CD8-positive, alpha-beta T cell (primary cell): ENCODE measurements at regions of chr5 and their contacts with region 1.

Region 1: DNA sequence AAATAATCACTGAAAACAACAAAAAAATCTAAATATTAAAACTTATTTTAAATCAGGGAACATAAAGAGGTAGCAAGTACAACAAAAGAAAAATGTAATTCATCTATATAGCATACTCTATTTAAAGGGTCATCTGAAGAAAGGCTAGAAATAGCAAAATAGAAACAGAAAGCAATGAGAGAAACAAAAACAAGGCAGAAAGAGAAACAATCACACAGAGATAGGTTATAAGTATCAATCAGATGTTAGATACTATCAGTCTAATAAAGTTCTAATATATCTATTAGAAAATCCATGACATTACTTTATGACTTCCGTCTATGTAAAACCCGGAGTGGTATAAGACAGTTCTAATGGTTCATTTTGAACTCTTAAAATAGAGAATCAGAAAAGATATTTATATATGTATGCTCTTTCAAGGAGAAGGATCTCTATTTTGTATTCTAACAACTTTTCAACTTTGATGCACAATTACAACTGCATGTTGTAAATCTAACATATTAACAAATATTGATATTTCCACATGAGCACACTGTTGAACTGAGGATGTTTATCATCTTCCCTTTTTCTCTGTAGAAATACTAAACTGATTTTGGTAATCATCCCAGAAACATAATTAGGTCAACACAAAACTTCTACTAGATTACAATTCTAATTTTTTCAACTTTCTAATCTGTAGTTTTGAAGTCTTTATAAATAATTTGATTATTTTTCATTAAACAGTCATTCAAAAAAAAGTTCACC is 15.8 kb downstream of the RICTOR start:
- DNase-seq: no peak
- ATAC-seq: peak; percentile 31
- H3K4me3 ChIP-seq: peak overlapping the region in 1 of 2 experiments; percentile 20
- H3K4me3 Mint-ChIP-seq: peak overlapping the region; percentile 54
- H3K27ac ChIP-seq: peak overlapping the region in 1 of 2 experiments; percentile 19
- H3K27ac Mint-ChIP-seq: peak overlapping the region; percentile 86
- H3K4me1 ChIP-seq: peaks cover 54% of the 10 kb centered on the region
- H3K4me1 Mint-ChIP-seq: peaks cover 88% of the 10 kb centered on the region
- H3K27me3 ChIP-seq: no peaks in the 10 kb centered on the region
- H3K27me3 Mint-ChIP-seq: no peaks in the 10 kb centered on the region
- CTCF ChIP-seq: no peak

Region 2: DNA sequence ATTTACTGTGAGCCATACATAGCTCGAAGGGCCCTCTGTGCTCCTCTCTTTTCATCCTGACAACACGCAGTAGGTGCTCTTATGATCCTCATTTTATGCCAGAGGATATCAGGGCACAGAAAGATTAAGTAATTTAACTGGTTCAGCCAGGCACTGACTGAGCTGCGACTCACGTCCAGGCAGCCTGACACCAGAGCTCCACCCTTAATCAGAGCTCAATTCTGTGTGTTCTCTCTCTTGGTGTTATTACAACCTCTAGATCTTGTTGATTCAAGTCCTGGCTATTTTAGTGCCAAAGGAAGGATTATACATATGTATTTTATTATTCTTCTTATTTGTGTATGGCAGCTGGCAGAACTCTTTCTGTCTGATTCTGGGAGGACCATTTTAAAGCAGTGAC is 152.8 kb before region 1 on chr5:
- CTCF ChIA-PET with region 1: no interaction called
- POLR2A ChIA-PET with region 1: no interaction called
- intact Hi-C with region 1: no loop called
- DNase-seq: no peak
- ATAC-seq: no peak
- H3K4me3 ChIP-seq: no peak overlapping the region
- H3K4me3 Mint-ChIP-seq: no peak overlapping the region
- H3K27ac ChIP-seq: no peak overlapping the region
- H3K27ac Mint-ChIP-seq: no peak overlapping the region
- H3K4me1 ChIP-seq: no peaks in the 10 kb centered on the region
- H3K4me1 Mint-ChIP-seq: no peaks in the 10 kb centered on the region
- H3K27me3 ChIP-seq: peaks cover 0 to 3% of the 10 kb centered on the region in 2 experiments
- H3K27me3 Mint-ChIP-seq: peaks cover 31% of the 10 kb centered on the region
- CTCF ChIP-seq: no peak

Region 3: GRCh38 chr5:39015743-39016586 is 42.4 kb before region 1 on chr5:
- CTCF ChIA-PET with region 1: no interaction called
- POLR2A ChIA-PET with region 1: no interaction called
- intact Hi-C with region 1: loop called in 1 of 2 experiments (anchors 5 kb)
- DNase-seq: no peak
- ATAC-seq: no peak
- H3K4me3 ChIP-seq: no peak overlapping the region
- H3K4me3 Mint-ChIP-seq: no peak overlapping the region
- H3K27ac ChIP-seq: no peak overlapping the region
- H3K27ac Mint-ChIP-seq: peak overlapping the region; percentile 75
- H3K4me1 ChIP-seq: peaks cover 7% of the 10 kb centered on the region
- H3K4me1 Mint-ChIP-seq: peaks cover 45% of the 10 kb centered on the region
- H3K27me3 ChIP-seq: no peaks in the 10 kb centered on the region
- H3K27me3 Mint-ChIP-seq: no peaks in the 10 kb centered on the region
- CTCF ChIP-seq: no peak

Region 4: GRCh38 chr5:39024884-39025283 is 33.5 kb before region 1 on chr5:
- CTCF ChIA-PET with region 1: no interaction called
- POLR2A ChIA-PET with region 1: no interaction called
- intact Hi-C with region 1: loop called in 1 of 2 experiments (anchors 5 kb)
- DNase-seq: no peak
- ATAC-seq: no peak
- H3K4me3 ChIP-seq: no peak overlapping the region
- H3K4me3 Mint-ChIP-seq: no peak overlapping the region
- H3K27ac ChIP-seq: no peak overlapping the region
- H3K27ac Mint-ChIP-seq: peak overlapping the region; percentile 76
- H3K4me1 ChIP-seq: peaks cover 27% of the 10 kb centered on the region
- H3K4me1 Mint-ChIP-seq: peaks cover 61% of the 10 kb centered on the region
- H3K27me3 ChIP-seq: no peaks in the 10 kb centered on the region
- H3K27me3 Mint-ChIP-seq: no peaks in the 10 kb centered on the region
- CTCF ChIP-seq: no peak

Region 5: DNA sequence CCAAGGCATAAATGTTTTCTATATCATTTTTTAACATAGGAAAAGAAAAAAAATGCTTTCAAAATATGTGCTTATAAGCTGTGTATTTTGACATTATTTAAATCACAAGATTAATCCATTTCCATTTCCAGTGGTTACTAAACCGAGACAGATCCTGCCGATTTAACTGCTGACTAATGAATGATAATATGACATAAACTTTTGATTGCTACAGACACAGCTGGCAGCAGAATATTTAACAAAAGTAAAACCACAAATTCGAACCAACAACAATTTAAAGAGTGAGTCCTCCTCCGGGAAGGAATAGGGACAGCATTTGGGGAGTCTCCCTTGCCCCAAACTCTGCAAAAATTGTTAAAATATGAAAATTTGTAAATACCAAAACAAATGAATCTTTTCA is 767.7 kb after region 1 on chr5:
- CTCF ChIA-PET with region 1: no interaction called
- POLR2A ChIA-PET with region 1: no interaction called
- intact Hi-C with region 1: no loop called
- DNase-seq: no peak
- ATAC-seq: no peak
- H3K4me3 ChIP-seq: no peak overlapping the region
- H3K4me3 Mint-ChIP-seq: no peak overlapping the region
- H3K27ac ChIP-seq: no peak overlapping the region
- H3K27ac Mint-ChIP-seq: no peak overlapping the region
- H3K4me1 ChIP-seq: no peaks in the 10 kb centered on the region
- H3K4me1 Mint-ChIP-seq: no peaks in the 10 kb centered on the region
- H3K27me3 ChIP-seq: no peaks in the 10 kb centered on the region
- H3K27me3 Mint-ChIP-seq: peaks cover under 1% of the 10 kb centered on the region
- CTCF ChIP-seq: no peak